ENCODE measurements at regions of chr9 and their contacts with region 1.

Region 1: DNA sequence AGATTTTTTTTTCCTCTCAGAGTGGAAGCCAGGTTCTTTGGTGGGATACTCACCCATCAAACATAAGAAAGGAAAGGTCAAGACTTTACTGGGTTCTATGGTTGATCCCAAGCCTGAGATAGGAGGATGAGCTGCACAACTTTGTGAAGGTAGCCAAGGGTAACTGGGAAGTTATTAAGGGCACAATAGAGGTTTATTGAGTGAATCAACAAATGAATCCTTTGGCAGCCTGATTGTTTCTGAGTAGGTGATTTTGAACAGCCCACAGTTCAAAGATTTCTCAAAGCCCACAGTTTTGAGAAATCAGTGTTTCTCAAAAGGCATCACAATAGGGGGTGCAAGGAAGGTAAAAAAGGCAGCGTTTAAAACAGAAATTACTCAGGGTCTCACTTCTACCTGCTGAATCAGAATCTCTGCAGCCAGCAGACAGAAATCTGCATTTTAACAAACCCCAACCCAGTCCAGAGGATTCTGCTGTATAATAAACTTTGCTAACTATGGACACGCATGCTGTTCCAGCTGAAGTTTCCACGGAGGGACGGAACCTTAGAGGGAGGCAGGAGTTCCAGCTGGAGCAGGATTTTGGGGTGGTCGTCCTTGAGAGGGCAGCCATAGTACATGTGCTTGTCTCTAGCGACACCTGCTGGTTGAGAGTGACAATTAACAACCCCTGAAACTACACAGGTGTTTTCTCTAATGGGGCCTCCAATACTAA is 32.7 kb upstream of the FSD1L start:
- DNase-seq: peak in 1 of 2 donors; percentile 25
- H3K4me3 ChIP-seq: no peak overlapping the region
- H3K27ac ChIP-seq: no peak overlapping the region
- H3K4me1 ChIP-seq: no peaks in the 10 kb centered on the region
- H3K27me3 ChIP-seq: no peaks in the 10 kb centered on the region
- CTCF ChIP-seq: peak; percentile 59 to 93 (median 89)
- POLR2A ChIP-seq: no peak

Region 2: DNA sequence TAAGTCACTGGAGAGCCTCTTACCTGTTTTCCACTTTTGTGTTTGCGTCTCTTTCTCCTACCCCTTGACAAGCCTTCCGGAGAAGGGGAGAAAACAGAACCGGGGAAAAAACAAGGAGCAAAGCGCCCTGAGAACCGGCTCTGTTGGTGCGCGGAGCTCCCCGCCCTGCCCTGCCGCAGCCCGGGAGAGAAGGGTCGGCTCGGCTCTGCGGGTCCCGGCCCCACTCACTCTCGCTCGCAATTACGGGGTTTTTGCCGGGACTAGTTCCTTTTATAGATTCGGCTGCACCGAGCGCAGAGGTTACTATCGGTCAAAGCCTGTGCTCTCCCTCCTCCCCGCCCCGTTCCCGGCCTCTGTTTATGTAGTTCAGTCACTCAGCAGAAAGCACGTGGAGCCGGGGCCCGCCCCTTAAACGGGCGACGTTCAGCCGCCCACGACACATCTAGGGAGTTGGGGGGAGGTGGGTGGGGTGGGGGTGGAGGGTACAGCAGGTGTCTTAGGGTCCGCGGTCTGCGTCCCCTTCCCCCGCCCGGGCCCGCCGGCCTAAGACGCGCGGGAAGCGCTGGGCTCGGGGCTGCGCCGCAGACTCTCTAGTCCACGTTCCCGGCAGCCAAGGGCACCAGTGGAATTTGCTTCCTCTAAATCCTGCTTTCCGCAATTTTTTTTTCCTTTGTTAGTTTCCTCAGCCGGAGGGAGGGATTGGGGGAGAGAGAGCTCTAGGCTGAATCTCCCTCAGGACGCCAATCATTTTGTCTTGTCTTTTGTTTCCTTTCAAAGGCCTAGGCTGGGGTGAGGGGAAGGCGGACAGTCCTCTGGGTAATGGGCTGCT is 487.0 kb before region 1 on chr9 and contains the start of gene ABCA1:
- intact Hi-C with region 1: loop called (anchors 10 kb)
- DNase-seq: peak; percentile 84 to 86
- H3K4me3 ChIP-seq: peak within 1 kb of the TSS; percentile 84 to 91 (median 89)
- H3K27ac ChIP-seq: peak within 1 kb of the TSS; percentile 81 to 84
- H3K4me1 ChIP-seq: no peaks in the 10 kb centered on the region
- H3K27me3 ChIP-seq: no peaks in the 10 kb centered on the region
- CTCF ChIP-seq: no peak
- POLR2A ChIP-seq: peak; percentile 36
- total RNA-seq, gene ABCA1: 57.0 to 100 (median 67.8) TPM

Region 3: DNA sequence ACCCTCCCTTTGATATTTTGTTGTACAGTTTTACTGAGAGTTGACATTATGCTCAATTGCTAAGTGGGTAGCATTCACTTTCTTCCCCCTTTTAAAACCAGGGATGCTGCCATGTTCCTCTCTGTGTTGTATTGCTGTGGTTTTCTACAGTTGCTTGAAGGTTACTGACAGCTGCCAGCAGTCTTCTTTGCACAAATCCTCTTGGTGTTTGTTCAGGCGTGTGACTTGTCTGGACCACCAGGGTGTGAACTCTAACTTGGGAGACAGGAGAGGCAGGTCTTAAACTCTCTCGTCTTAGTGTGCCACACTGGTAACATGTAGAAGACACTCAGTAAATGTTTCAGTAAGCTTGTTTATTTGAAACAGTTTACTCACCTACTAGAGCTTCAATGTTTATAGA is 145.5 kb before region 1 on chr9:
- intact Hi-C with region 1: loop called (anchors 5 kb)
- DNase-seq: no peak
- H3K4me3 ChIP-seq: no peak overlapping the region
- H3K27ac ChIP-seq: no peak overlapping the region
- H3K4me1 ChIP-seq: peaks cover 0 to 3% of the 10 kb centered on the region in 2 donors
- H3K27me3 ChIP-seq: no peaks in the 10 kb centered on the region
- CTCF ChIP-seq: no peak
- POLR2A ChIP-seq: no peak